ENCODE measurements at regions of chr15 and their contacts with region 1.

Region 1: GRCh38 chr15:85582131-85583079 is 202.0 kb downstream of the AKAP13 start:
- DNase-seq: no peak

Region 2: DNA sequence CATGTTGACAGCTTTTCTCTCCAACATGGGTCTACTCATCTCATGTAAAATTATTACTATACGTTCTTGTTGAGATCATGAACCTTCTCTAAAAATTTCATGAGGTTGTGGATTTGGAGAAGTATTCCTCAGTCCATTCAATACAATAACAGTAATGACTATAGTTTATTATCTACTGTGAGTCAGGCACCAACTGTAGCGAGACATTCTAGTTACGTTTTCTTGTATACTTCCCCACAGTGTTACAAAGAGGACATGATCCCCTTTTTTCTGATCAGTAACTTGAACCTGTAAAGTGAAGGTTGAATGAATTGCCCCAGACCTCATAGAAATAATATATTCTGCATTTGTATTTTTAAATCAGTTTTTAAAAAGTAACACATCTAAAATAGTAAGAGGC is 125.6 kb before region 1 on chr15:
- intact Hi-C with region 1: no loop called
- DNase-seq: no peak

Region 3: GRCh38 chr15:85494048-85494793 is 88.2 kb before region 1 on chr15:
- intact Hi-C with region 1: loop called in 1 of 2 experiments (anchors 10 kb)
- DNase-seq: no peak

Region 4: GRCh38 chr15:85515212-85515611 is 67.2 kb before region 1 on chr15:
- intact Hi-C with region 1: no loop called
- DNase-seq: no peak

Measured in posterior vena cava (tissue), 2 donors.